ENCODE measurements at regions of chr1 and their contacts with region 1.

Region 1: DNA sequence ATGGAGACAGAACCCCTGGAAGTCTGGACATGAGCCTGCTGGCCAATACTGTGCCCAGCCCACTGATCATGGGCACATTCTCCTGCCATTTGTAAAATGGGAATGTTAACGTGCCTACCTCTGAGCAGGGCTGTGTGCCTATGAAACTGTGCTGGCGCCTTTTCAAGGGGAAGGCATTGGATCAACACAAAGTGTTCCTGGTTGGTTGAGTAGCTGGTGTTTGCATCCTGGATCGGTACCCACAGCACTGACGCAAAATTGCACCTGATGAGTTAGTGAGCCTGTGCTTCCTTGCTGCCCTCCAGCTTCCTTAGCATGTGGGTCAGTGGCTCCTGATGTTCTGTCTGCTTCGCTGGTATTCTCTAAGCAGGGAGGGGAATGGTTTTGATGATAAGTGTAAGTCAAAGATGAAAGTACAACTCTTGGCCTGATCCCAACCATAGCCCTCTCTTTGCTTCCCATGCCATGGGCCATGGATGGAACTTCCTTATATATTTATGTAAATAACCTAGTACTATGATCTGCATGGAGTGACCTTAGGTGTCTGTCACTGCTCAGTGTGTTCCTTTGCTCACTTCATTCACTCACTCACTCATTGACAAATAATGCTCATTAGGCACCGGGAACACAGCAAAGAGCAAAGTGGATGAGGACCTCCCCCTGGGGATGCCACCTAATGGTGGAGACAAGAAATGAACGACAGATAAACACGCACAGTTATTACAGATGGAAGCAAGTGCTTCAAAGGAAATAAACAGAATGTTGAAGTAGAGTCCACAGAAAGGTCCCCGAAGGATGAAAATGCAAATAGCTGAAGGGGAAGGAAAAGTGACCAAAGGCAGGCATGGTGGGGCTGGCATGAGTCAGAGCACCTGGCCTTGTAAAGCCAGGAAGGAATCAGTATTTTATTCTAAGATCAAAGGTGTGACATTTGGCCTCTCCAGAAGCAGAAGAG is 22.8 kb downstream of the MAB21L3 start:
- DNase-seq: no peak
- H3K4me3 ChIP-seq: no peak overlapping the region
- CTCF ChIP-seq: peak; percentile 22

Region 2: DNA sequence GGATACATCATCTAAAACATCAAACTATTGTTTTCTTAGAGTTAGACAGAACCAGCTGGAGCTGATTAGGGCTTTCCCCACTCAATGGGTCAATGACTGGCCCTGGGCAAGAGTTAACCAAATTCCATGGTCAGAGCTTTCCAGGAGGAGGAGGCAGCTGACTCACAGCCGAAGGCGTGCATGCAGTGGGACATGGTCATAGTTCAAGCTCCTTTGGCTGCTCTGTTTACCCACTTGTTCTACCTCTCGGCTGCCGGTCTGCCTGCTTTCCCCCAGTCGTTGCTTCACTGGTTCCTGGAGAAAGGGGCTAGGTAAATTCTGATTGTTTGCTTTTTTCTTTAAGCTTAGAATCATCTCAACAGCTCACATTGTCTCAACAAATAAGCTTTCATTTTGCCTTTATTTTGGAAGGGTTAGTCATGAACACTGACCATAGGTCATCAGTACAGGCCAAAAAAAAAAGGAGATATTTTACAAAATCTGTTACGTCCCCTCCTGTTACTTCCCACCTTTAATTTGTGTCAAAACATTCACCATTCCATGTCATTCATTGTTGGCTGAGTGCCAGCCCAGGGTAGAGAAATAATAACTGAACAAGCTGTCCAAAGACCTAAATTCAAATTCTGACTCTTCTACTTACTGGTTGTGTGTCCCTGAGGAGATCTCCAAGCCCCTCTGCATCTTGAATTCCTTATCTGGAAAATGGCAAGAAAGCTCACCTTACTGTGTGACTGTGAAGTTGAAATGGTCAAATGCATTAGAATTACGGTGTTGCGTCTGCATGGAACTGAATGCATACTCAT is 10.8 kb before region 1 on chr1:
- CTCF ChIA-PET with region 1: interaction called, 26 read pairs
- POLR2A ChIA-PET with region 1: no interaction called
- DNase-seq: peak; percentile 54
- H3K4me3 ChIP-seq: no peak overlapping the region
- CTCF ChIP-seq: no peak